Common myeloid progenitor, CD34-positive (primary cell): ENCODE measurements at regions of chr9 and their contacts with region 1.

Region 1: DNA sequence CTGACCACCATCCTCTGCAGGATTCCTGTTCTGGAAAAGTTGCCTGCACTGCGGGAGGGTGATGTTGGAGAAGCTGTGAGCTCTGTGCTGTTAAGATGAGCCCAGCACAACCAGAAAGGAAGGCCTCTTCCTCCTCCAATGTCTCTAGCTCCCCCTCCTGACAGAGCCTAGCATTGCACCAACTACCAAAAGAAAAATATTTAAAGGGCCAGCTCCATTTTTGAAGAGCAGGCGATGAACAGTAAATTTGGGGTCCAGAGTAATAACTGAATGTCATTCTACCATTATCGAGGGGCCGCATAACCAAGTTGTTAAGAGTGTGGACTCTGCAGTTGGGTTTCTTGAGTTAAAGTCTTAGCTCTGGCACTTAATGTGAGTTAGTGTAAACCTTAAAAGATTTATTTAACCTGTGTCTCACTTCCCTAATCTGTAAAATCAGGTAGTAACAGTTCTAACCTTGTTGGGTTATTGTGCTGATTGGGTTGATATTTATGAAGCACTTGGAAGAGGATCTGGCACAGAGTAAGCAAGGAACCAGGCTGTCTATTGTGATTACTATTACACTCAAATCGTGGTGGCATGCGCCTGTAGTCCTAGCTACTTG is 3.9 kb downstream of the TEX53 start:
- DNase-seq: peak; percentile 73 to 87 (median 80)
- H3K4me3 ChIP-seq: no peak overlapping the region
- H3K27ac ChIP-seq: peak overlapping the region in 1 of 2 experiments; percentile 8
- H3K4me1 ChIP-seq: peaks cover 0 to 7% (median 6%) of the 10 kb centered on the region in 4 experiments
- H3K27me3 ChIP-seq: no peaks in the 10 kb centered on the region

Region 2: DNA sequence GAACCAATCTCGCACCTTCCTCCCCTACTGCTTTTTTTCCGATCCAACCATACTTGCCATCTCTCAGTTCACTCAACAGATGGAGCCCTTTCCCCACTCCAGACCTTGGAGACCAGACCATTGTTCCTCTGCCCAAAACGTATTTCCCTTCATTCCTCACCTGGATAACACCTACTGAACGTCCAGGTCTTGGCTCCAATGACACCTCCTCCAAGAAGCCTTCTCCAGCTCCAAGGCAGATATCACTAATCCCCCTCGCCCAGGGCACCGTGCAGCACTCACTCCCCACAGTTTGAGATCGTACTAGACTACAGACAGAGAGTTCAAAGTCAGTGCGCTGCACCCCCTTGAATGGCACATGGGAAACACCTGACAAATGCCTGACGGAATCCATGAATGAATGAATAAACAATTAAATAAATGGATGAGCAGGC is 218.8 kb before region 1 on chr9:
- CTCF ChIA-PET with region 1: interaction called, 88 read pairs
- POLR2A ChIA-PET with region 1: interaction called, 3 read pairs
- DNase-seq: peak; percentile 61 to 69 (median 62)
- H3K4me3 ChIP-seq: no peak overlapping the region
- H3K27ac ChIP-seq: no peak overlapping the region
- H3K4me1 ChIP-seq: peaks cover 0 to 11% (median 3%) of the 10 kb centered on the region in 4 experiments
- H3K27me3 ChIP-seq: no peaks in the 10 kb centered on the region

Region 3: DNA sequence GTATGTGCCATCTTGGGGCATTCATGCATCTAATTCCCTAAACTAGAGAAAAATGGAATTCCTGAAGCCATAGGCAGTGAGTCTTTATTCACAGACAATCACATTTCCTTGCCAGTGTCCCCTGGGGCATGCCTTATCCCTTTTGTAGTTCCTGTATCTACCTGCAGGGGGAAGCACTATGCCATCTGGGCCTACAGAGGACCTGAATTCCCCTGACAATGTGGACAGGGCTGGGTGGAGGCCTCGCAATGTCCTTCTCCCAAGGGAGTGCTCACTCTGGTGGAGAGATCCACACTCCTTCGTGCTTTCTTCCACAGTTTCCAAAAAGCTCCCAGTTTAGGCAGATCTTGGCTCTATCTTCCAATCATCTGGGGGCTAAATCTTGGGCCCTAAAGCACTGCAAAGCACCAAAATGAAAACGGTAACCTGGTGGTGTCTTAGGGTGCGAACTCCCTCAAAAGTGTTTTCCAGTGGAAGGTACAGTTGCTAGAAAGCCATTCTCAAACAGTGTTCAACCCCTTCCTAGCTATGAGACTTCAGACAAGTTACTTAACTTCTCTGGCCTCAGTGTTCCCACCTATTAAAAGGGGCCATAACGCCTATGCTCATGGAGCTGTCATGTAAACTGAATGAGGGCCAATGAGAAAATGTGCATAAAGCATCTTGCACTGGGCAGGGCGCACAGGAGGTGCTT is 165.9 kb before region 1 on chr9:
- CTCF ChIA-PET with region 1: interaction called, 19 read pairs
- POLR2A ChIA-PET with region 1: no interaction called
- DNase-seq: peak; percentile 60 to 80 (median 72)
- H3K4me3 ChIP-seq: no peak overlapping the region
- H3K27ac ChIP-seq: no peak overlapping the region
- H3K4me1 ChIP-seq: peaks cover 0 to 6% (median 1%) of the 10 kb centered on the region in 4 experiments
- H3K27me3 ChIP-seq: no peaks in the 10 kb centered on the region

Region 4: GRCh38 chr9:114592356-114592755 is 61.3 kb before region 1 on chr9:
- CTCF ChIA-PET with region 1: interaction called, 99 read pairs
- POLR2A ChIA-PET with region 1: interaction called, 3 read pairs
- DNase-seq: peak; percentile 79 to 90 (median 90)
- H3K4me3 ChIP-seq: peak overlapping the region in 6 of 7 experiments; percentile 11 to 68 (median 33)
- H3K27ac ChIP-seq: peak overlapping the region; percentile 55 to 73
- H3K4me1 ChIP-seq: peaks cover 32 to 58% (median 47%) of the 10 kb centered on the region in 4 experiments
- H3K27me3 ChIP-seq: no peaks in the 10 kb centered on the region

Region 5: GRCh38 chr9:114641967-114642366 is 11.7 kb before region 1 on chr9:
- CTCF ChIA-PET with region 1: interaction called, 17 read pairs
- POLR2A ChIA-PET with region 1: no interaction called
- DNase-seq: peak; percentile 32 to 61 (median 57)
- H3K4me3 ChIP-seq: no peak overlapping the region
- H3K27ac ChIP-seq: no peak overlapping the region
- H3K4me1 ChIP-seq: peaks cover 0 to 5% (median 0%) of the 10 kb centered on the region in 4 experiments
- H3K27me3 ChIP-seq: no peaks in the 10 kb centered on the region